GM12878 (cell line): ENCODE measurements at regions of chr15 and their contacts with region 1.

Region 1: DNA sequence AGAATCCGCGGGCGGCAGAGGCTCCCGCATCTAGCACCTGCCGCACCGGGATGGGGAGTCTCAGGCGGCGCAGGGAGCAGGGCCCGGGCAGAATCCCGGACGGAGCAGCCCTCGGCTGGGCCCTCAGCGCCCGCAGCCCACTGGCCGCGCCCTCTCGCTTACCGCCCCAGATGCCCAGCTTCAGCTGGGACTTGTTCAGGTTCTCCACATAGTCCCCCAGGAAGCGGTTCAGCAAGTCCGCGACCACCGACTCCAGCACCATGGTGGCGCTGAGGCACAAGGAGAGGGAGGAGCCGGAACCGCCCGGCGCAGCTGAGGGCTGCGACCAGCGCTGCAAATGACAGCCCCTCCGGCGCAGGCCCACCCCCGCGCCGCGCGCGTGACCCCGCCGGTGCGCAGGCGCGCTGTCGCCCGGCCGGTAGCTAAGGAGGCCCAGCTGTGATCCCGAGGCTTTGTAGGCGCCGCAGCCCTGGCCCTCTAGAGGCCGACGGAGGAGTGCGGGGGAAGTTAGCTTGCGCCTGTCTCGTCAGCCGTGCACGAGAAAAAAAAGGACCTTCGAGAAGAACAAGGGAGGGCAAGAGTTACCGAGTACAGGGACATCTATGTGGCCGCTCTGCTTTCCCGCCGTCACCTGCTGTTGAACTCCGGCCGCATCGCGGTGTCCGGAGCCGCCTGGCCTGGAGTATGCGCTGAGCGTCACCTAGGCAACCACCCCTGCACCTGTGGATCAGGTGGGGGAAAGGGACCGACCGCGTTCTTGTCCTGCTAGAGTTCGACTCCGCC is at the start of gene VPS13C:
- DNase-seq: peak; percentile 80
- ATAC-seq: peak; percentile 94
- H3K4me3 ChIP-seq: peak within 1 kb of the TSS; percentile 73
- H3K27ac ChIP-seq: peak within 1 kb of the TSS; percentile 91
- H3K4me1 ChIP-seq: no peaks in the 10 kb centered on the region
- H3K27me3 ChIP-seq: peaks cover 0 to under 1% of the 10 kb centered on the region in 2 experiments; a peak in 1 of 4 replicates
- CTCF ChIP-seq: peak; percentile 80 to 85 (median 85)
- EP300 ChIP-seq: peak in 1 of 2 experiments; percentile 46; a peak in 2 of 4 replicates
- POLR2A ChIP-seq: peak; percentile 94
- RAD21 ChIP-seq: peak; percentile 52
- polyA plus RNA-seq, gene VPS13C: 10.9 to 19.5 TPM

Region 2: GRCh38 chr15:61828012-61828411 is 232.3 kb before region 1 on chr15:
- CTCF ChIA-PET with region 1: no interaction called
- POLR2A ChIA-PET with region 1: no interaction called
- RAD21 ChIA-PET with region 1: no interaction called
- SMC1A ChIA-PET with region 1: no interaction called
- in situ Hi-C with region 1: no loop called
- intact Hi-C with region 1: no loop called
- DNase-seq: no peak
- ATAC-seq: no peak
- H3K4me3 ChIP-seq: no peak overlapping the region
- H3K27ac ChIP-seq: no peak overlapping the region
- H3K4me1 ChIP-seq: no peaks in the 10 kb centered on the region
- H3K27me3 ChIP-seq: no peaks in the 10 kb centered on the region; a peak in 2 of 4 replicates
- CTCF ChIP-seq: no peak
- EP300 ChIP-seq: no peak
- POLR2A ChIP-seq: no peak
- RAD21 ChIP-seq: no peak

Region 3: GRCh38 chr15:62026487-62027262 is 33.6 kb before region 1 on chr15:
- CTCF ChIA-PET with region 1: interaction called, 13 read pairs
- POLR2A ChIA-PET with region 1: interaction called, 4 read pairs
- RAD21 ChIA-PET with region 1: interaction called, 14 read pairs
- SMC1A ChIA-PET with region 1: interaction called, 20 read pairs
- in situ Hi-C with region 1: no loop called
- intact Hi-C with region 1: no loop called
- DNase-seq: no peak
- ATAC-seq: peak; percentile 94
- H3K4me3 ChIP-seq: no peak overlapping the region
- H3K27ac ChIP-seq: peak overlapping the region; percentile 54; the same call in 1 of the 2 replicates
- H3K4me1 ChIP-seq: peaks cover 21% of the 10 kb centered on the region; the same call in 1 of the 2 replicates
- H3K27me3 ChIP-seq: no peaks in the 10 kb centered on the region
- CTCF ChIP-seq: no peak
- EP300 ChIP-seq: no peak; a peak in 1 of 4 replicates
- POLR2A ChIP-seq: no peak
- RAD21 ChIP-seq: no peak

Region 4: GRCh38 chr15:62035256-62035908 is 24.9 kb before region 1 on chr15:
- CTCF ChIA-PET with region 1: interaction called, 13 read pairs
- POLR2A ChIA-PET with region 1: no interaction called
- RAD21 ChIA-PET with region 1: interaction called, 3 read pairs
- SMC1A ChIA-PET with region 1: interaction called, 3 read pairs
- in situ Hi-C with region 1: no loop called
- intact Hi-C with region 1: no loop called
- DNase-seq: no peak
- ATAC-seq: peak; percentile 22; the same call in 1 of the 3 replicates
- H3K4me3 ChIP-seq: no peak overlapping the region
- H3K27ac ChIP-seq: no peak overlapping the region
- H3K4me1 ChIP-seq: no peaks in the 10 kb centered on the region
- H3K27me3 ChIP-seq: no peaks in the 10 kb centered on the region
- CTCF ChIP-seq: no peak
- EP300 ChIP-seq: no peak
- POLR2A ChIP-seq: no peak
- RAD21 ChIP-seq: no peak

Region 5: GRCh38 chr15:62046078-62046743 is 14.1 kb before region 1 on chr15:
- CTCF ChIA-PET with region 1: interaction called, 6 read pairs
- POLR2A ChIA-PET with region 1: interaction called, 7 read pairs
- RAD21 ChIA-PET with region 1: interaction called, 4 read pairs
- SMC1A ChIA-PET with region 1: interaction called, 15 read pairs
- in situ Hi-C with region 1: no loop called
- intact Hi-C with region 1: no loop called
- DNase-seq: no peak
- ATAC-seq: peak; percentile 93
- H3K4me3 ChIP-seq: peak overlapping the region; percentile 31
- H3K27ac ChIP-seq: peak overlapping the region; percentile 67
- H3K4me1 ChIP-seq: peaks cover 15% of the 10 kb centered on the region
- H3K27me3 ChIP-seq: no peaks in the 10 kb centered on the region
- CTCF ChIP-seq: no peak
- EP300 ChIP-seq: no peak
- POLR2A ChIP-seq: no peak
- RAD21 ChIP-seq: no peak